Activated CD4-positive, alpha-beta memory T cell treated with anti-CD3 and anti-CD28 coated beads for 36 hours (primary cell): ENCODE measurements at regions of chr9 and their contacts with region 1.

Region 1: GRCh38 chr9:126781186-126782052 is 23.4 kb upstream of the ZBTB43 start:
- DNase-seq: peak; percentile 88
- H3K4me3 Mint-ChIP-seq: no peak overlapping the region
- H3K27ac Mint-ChIP-seq: no peak overlapping the region
- H3K4me1 Mint-ChIP-seq: no peaks in the 10 kb centered on the region
- H3K27me3 Mint-ChIP-seq: peaks cover 20% of the 10 kb centered on the region

Region 2: GRCh38 chr9:126558051-126558665 is 223.3 kb before region 1 on chr9:
- CTCF ChIA-PET with region 1: no interaction called
- POLR2A ChIA-PET with region 1: no interaction called
- intact Hi-C with region 1: no loop called
- DNase-seq: peak; percentile 78
- H3K4me3 Mint-ChIP-seq: no peak overlapping the region
- H3K27ac Mint-ChIP-seq: no peak overlapping the region
- H3K4me1 Mint-ChIP-seq: no peaks in the 10 kb centered on the region
- H3K27me3 Mint-ChIP-seq: peaks cover 32% of the 10 kb centered on the region

Region 3: DNA sequence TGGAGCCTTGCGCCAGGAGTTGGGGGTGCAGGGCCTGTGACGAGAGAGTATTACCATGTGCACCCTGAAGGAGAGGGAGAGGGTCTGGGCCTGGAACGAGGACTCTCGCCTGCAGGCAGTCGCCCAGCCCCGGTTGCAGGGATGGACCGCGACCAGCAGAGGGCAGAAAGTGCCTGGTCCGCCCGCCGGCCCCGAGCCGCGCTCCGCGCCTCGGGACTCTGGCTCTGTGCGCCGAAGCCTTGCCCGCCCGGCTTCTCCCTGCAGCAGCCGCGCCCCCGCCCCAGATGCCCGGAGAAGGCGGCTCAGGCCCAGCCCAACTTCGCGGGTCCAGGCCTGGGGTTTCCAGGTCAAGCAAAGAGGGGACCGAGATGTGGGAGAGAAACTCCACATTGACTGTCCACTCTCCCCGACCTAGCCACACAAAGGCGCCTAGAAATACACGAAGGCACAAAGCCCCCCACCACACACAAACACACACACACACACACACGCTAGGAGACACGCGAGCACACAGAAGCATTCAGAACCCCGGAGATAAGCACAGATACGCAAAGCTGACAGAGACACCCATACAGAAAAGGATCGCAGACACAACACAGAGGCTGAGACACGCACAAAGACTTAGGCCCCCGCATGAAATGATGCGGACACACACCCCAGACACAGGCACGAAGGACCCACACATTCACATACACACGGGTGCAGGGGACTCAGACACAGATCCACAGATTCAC is 169.7 kb before region 1 on chr9:
- CTCF ChIA-PET with region 1: interaction called, 6 read pairs
- POLR2A ChIA-PET with region 1: no interaction called
- intact Hi-C with region 1: loop called (anchors 10 kb)
- DNase-seq: peak; percentile 82
- H3K4me3 Mint-ChIP-seq: no peak overlapping the region
- H3K27ac Mint-ChIP-seq: no peak overlapping the region
- H3K4me1 Mint-ChIP-seq: peaks cover 20% of the 10 kb centered on the region
- H3K27me3 Mint-ChIP-seq: peaks cover 68% of the 10 kb centered on the region

Region 4: DNA sequence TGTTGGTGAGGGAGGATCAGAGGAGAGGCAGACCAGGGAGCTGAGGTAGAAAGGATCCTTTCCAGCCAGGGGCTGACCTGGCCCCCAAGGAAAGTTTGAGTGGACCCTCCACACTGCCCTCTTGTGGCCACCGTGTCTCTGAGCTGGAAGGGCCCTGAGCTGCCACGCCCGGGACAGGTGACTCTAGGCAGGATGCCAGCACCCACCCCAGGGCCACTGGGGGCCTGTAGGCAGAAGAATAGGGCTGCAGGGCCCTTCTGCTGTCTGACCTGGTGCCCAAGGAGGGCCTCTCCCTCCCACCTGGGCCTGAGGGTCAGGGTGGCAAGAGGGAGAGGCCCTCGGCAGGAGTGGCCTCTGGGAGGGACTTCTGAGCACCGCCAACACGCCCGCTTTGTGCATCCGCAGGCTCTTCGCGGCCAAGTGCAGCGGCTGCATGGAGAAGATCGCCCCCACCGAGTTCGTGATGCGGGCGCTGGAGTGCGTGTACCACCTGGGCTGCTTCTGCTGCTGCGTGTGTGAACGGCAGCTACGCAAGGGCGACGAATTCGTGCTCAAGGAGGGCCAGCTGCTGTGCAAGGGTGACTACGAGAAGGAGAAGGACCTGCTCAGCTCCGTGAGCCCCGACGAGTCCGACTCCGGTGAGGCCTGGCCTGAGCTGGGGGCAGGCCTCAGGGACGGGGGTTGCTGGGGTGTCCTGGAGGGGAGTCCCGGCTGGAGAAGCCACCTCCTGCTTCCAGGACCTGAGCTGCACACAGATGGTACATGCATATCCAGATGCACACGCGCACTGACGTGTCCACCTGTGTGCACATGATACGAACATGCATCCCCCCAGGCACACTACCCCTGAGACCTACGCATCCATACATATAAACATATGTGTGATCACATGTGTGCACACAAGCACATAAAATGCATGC is 90.7 kb before region 1 on chr9:
- CTCF ChIA-PET with region 1: interaction called, 17 read pairs
- POLR2A ChIA-PET with region 1: no interaction called
- intact Hi-C with region 1: no loop called
- DNase-seq: peak; percentile 68
- H3K4me3 Mint-ChIP-seq: no peak overlapping the region
- H3K27ac Mint-ChIP-seq: no peak overlapping the region
- H3K4me1 Mint-ChIP-seq: no peaks in the 10 kb centered on the region
- H3K27me3 Mint-ChIP-seq: peaks cover 29% of the 10 kb centered on the region

Region 5: GRCh38 chr9:126715382-126715781 is 66.0 kb before region 1 on chr9:
- CTCF ChIA-PET with region 1: interaction called, 26 read pairs
- POLR2A ChIA-PET with region 1: no interaction called
- intact Hi-C with region 1: no loop called
- DNase-seq: no peak
- H3K4me3 Mint-ChIP-seq: no peak overlapping the region
- H3K27ac Mint-ChIP-seq: no peak overlapping the region
- H3K4me1 Mint-ChIP-seq: peaks cover 13% of the 10 kb centered on the region
- H3K27me3 Mint-ChIP-seq: peaks cover 3% of the 10 kb centered on the region

Region 6: DNA sequence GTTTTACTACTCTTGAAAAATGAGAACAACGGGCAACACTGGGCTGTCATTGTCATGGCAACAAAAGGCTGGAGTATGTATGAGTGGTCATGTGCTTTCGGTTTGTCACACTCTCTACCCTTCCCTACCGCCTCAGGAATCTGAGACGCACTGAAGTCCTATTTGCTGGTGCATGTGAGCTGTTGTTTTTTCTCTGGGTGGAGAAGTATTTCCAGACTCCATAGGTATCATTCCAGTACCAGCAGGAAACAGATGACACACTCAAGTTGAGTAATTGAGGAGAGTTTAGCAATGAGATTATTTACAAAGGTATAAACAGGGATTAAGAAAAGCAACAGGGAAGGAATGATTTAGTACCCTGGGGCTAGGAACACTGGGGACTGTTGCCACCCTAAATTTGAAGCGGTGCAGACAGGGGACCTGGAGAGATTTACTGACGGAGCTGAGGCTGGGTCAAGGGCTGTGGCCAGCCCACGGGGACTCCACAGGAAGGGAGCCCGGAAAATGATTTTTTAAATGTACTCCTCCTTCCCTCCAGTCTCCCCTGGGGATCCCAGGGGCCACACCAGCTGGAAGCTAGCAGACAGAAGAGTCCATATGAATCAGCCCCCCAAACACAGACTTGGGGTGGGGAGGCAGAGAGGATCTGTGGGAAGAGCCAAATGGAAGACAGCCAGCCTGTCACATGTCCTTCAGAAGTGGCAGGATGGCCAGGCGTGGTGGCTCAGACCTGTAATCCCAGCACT is 10.2 kb after region 1 on chr9:
- CTCF ChIA-PET with region 1: interaction called, 11 read pairs
- POLR2A ChIA-PET with region 1: no interaction called
- intact Hi-C with region 1: no loop called
- DNase-seq: no peak
- H3K4me3 Mint-ChIP-seq: no peak overlapping the region
- H3K27ac Mint-ChIP-seq: no peak overlapping the region
- H3K4me1 Mint-ChIP-seq: peaks cover 4% of the 10 kb centered on the region
- H3K27me3 Mint-ChIP-seq: peaks cover 34% of the 10 kb centered on the region